Activated T-helper 2 cell treated with anti-CD3 and anti-CD28 coated beads, Interferon-gamma antibody, Interleukin-2, Interleukin-4, amounts not matched to agents 10 μg/mL and 5 μg/mL and 100 μg/mL, durations not matched to agents 14 hours and 24 hours and 36 hours (primary cell): ENCODE measurements at regions of chr11 and their contacts with region 1.

Region 1: GRCh38 chr11:126211235-126212088 is at the starts of genes FAM118B and RPUSD4:
- DNase-seq: peak; percentile 98
- H3K4me3 Mint-ChIP-seq: peak within 1 kb of the TSS; percentile 99
- H3K27ac Mint-ChIP-seq: peak within 1 kb of the TSS; percentile 92
- H3K4me1 Mint-ChIP-seq: peaks cover 27% of the 10 kb centered on the region
- H3K27me3 Mint-ChIP-seq: no peaks in the 10 kb centered on the region
- total RNA-seq, gene FAM118B: 11.6 and 11.7 TPM in 2 replicates
- total RNA-seq, gene RPUSD4: 43.9 and 44.6 TPM in 2 replicates

Region 2: GRCh38 chr11:125592305-125593112 is 619.0 kb before region 1 on chr11 and contains the start of gene STT3A:
- intact Hi-C with region 1: loop called (anchors 1 kb)
- DNase-seq: peak; percentile 97
- H3K4me3 Mint-ChIP-seq: peak within 1 kb of the TSS; percentile 99
- H3K27ac Mint-ChIP-seq: peak within 1 kb of the TSS; percentile 92
- H3K4me1 Mint-ChIP-seq: peaks cover 38% of the 10 kb centered on the region
- H3K27me3 Mint-ChIP-seq: no peaks in the 10 kb centered on the region
- total RNA-seq, gene STT3A: 187 and 198 TPM in 2 replicates

Region 3: DNA sequence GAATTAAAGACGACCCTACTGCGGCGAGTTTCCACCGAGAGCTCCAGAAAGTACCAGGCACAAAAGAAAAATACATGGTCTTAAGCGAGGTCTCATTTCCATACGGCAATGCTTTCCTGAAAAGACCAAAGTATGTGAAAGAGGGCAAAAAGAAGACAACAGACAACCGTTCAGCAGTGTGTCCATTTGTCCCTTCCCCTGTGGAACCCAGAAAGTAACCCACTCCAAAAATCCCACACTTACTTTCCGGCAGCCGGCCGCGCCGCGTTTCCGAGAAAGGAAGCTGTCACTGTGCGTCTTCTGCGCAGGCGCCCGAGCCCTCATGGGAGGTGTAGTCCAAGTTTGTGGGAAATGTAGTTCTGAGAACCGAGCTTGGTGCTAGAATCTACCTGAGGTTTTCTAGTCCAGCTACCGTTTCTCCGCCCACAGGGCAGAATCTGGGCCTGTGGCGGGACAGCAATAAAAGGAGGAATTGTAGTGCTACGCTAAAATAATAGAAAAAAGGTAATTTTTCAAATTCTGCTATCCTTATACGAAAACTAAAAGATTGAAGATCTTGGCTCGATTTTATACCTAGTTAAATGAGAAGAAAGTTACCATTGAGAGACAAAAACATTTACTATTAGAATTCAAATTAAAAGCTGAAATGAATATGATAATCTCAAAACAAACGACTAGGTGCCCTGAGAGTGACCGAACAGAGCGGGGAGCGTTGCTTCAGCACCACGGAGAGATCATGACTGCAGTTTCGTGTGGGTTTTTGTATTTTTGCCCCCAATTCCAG is 308.3 kb before region 1 on chr11 and contains the start of gene PUS3:
- intact Hi-C with region 1: loop called (anchors 1 kb)
- DNase-seq: peak; percentile 84
- H3K4me3 Mint-ChIP-seq: peak within 1 kb of the TSS; percentile 94
- H3K27ac Mint-ChIP-seq: peak within 1 kb of the TSS; percentile 92
- H3K4me1 Mint-ChIP-seq: peaks cover 29% of the 10 kb centered on the region
- H3K27me3 Mint-ChIP-seq: peaks cover 31% of the 10 kb centered on the region
- total RNA-seq, gene PUS3: 16.0 and 17.0 TPM in 2 replicates

Region 4: DNA sequence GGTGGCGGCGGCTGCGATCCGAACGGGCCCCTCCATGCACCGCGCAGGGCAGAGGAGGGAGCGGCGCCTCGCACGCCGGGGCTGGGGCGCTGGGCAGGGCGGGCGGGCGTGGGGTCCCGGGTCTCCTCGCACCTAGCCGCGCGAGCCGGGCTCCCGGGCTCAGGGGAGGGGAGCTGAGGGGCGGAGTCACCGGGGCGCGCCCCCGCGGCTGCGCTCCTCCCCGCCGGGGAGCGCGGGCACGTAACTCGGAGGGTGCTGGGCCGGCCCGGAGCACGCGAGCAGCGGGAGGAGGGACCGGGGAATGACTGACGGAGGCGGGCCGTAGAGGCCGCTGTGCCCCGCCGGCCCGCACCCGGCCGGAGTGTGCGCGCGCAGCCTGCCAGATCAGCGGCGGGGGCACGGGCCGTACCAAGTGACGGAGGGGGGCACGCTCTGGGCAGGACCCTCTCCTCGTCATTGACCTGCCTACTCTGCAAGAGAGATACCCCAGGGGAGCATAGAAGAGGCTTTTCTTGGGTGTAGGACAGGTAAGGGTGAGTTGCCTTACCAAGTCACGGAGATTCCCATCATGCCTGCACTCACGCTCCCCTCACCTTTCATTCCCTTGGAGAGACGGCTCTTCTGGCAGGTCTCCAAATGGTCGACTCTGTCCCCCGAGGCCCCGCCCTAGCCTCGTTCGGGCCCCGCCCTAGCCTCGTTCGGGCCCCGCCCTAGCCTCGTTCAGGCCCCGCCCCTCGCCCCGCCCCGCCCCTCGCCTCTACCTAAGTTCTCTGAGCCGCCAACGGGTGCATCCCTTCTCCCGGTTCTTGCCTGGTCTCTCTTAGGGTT is 148.6 kb before region 1 on chr11 and contains the start of gene CDON:
- intact Hi-C with region 1: loop called (anchors 1 kb)
- DNase-seq: peak; percentile 90
- H3K4me3 Mint-ChIP-seq: peak within 1 kb of the TSS; percentile 81
- H3K27ac Mint-ChIP-seq: peak within 1 kb of the TSS; percentile 97
- H3K4me1 Mint-ChIP-seq: peaks cover 13% of the 10 kb centered on the region
- H3K27me3 Mint-ChIP-seq: peaks cover 46% of the 10 kb centered on the region
- total RNA-seq, gene CDON: 3.2 and 3.5 TPM in 2 replicates

Region 5: GRCh38 chr11:126282736-126283591 is 71.5 kb after region 1 on chr11 and contains the start of gene TIRAP:
- intact Hi-C with region 1: loop called (anchors 2 kb)
- DNase-seq: peak; percentile 55
- H3K4me3 Mint-ChIP-seq: peak within 1 kb of the TSS; percentile 99
- H3K27ac Mint-ChIP-seq: peak within 1 kb of the TSS; percentile 99
- H3K4me1 Mint-ChIP-seq: peaks cover 35% of the 10 kb centered on the region
- H3K27me3 Mint-ChIP-seq: no peaks in the 10 kb centered on the region
- total RNA-seq, gene TIRAP: 15.9 TPM in 2 replicates